Activated T-helper 1 cell treated with anti-CD3 and anti-CD28 coated beads, Interleukin-12 subunit alpha, Interleukin-12 subunit beta, Interleukin-2, Interleukin-4 antibody, amounts not matched to agents 30 ng/mL and 10 ng/mL and 1 ng/mL, durations not matched to agents 14 hours and 24 hours and 36 hours (primary cell): ENCODE measurements at regions of chr5 and their contacts with region 1.

Region 1: DNA sequence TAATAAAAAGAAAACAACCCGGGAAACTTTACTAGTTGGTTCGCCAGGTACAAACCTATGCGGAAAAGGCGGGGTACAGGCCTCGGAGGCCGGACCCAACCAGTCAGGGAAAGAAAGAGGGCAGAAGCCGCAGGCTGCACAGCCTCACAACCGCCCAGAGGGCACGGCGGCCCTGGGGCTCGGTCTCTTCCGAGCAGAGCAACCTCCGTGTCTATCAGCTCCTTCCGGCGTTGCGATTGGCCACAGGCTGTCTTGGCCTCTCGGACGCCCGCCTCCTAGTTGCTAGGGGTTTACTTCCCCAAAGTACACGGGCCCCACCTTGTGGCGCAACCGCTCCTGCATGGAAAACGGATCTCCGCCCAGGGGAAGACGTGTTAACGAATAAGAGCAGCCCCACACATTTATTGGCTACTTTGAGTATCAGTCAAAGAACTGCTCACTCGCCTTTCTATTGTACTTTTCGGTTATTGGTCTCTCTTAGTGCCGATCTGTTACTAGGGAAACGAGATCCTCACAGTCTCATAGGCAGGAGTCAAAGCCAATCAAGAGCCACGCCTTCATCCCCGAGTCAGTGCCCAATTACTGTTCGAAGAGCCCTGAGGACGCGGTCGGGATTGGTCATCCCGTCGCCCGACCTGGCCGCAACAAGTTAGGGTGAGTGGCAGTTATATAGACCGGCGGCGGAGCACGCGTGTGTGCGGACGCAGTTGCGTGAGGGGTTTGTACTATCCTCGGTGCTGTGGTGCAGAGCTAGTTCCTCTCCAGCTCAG is at the start of gene G3BP1:
- DNase-seq: peak; percentile 99
- H3K4me3 Mint-ChIP-seq: peak within 1 kb of the TSS; percentile 88
- H3K27ac Mint-ChIP-seq: peak within 1 kb of the TSS; percentile 67
- H3K4me1 Mint-ChIP-seq: peaks cover 37% of the 10 kb centered on the region
- H3K27me3 Mint-ChIP-seq: no peaks in the 10 kb centered on the region
- total RNA-seq, gene G3BP1: 340 and 348 TPM in 2 replicates

Region 2: DNA sequence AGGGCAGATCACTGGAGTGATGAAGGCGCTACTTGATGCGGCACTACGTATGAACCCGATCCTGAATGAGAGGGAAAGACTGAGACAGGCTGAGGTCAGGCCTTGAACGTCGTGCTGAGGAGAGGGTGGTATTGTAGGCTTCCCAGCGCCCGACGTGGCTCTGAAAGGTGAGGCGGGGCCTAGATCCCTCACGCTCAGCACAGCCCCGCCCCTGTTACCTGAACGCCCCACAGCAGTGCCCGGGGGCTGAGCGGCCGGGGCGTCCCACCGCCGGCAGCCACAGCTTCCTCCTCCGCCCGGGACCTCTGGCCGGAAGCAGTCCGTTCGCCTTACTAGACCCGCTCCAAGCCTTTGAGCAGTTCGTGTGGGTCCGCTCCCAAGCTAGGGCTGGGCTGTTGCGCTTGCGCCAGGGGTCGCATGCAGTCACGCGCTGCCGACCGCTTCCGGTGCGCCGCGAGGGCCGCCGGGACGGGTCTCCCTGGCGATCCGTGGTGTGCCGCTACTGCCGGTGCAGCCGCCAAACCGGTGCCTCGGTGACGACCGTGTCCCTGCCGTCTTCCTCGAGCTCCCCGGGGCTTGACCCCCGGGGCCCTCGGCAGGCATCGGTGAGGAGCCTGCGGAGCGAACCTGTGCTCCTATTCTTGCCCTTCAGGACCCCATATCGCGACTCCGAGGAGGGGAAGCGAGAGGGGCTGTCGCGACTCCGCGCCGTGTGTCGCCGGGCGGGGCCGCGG is 1771.0 kb before region 1 on chr5 and contains the starts of genes HMGXB3 and TIGD6:
- intact Hi-C with region 1: loop called (anchors 5 kb)
- DNase-seq: peak; percentile 82
- H3K4me3 Mint-ChIP-seq: peak within 1 kb of the TSS; percentile 99
- H3K27ac Mint-ChIP-seq: peak within 1 kb of the TSS; percentile 98
- H3K4me1 Mint-ChIP-seq: peaks cover 52% of the 10 kb centered on the region
- H3K27me3 Mint-ChIP-seq: no peaks in the 10 kb centered on the region
- total RNA-seq, gene HMGXB3: 49.1 and 49.9 TPM in 2 replicates
- total RNA-seq, gene TIGD6: 2.4 TPM in 2 replicates

Region 3: GRCh38 chr5:150758531-150759333 is 1012.7 kb before region 1 on chr5 and contains the start of gene DCTN4:
- intact Hi-C with region 1: loop called (anchors 5 kb)
- DNase-seq: peak; percentile 90
- H3K4me3 Mint-ChIP-seq: no peak within 1 kb of the TSS
- H3K27ac Mint-ChIP-seq: no peak within 1 kb of the TSS
- H3K4me1 Mint-ChIP-seq: peaks cover 34% of the 10 kb centered on the region
- H3K27me3 Mint-ChIP-seq: peaks cover 2% of the 10 kb centered on the region
- total RNA-seq, gene DCTN4: 42.3 and 46.4 TPM in 2 replicates

Region 4: DNA sequence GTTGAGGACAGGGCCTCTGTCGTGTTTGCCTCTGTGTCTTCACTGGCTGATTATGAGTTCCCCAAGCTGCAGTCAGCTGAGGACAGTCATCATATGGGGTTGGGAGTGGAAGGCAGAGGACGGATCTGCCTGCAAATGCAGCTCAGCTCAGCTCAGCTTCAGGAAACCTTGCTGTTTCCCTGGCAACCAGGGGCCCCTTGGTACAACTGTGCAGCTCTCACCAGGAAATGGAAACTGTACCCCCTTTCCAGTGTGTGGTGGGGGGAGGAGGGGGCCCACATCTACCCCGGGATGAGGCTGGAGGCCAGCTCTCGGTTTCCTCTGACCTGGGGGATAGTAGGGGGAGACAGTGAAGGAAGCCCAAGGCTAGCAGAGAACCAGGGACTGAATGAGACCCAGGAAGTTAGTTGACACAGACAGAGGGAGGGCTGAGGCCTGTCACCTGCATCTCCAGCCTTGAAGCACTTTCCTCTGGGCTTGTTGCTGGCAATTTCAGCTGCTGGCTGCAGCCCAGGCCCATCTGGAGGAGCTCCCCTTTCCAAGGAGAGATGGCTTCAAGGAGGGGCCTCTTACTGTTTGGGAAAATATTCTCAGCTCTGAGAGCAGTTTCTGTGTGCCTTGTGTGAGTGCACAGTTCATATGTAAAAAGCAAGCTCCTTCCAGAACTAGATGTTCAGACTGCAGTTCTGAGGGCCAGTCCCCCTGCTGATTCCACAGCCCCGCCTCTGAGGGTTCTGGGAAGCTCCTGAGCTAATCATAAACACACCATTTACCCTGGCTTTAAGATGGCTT is 620.8 kb before region 1 on chr5:
- intact Hi-C with region 1: loop called (anchors 1 kb)
- DNase-seq: peak; percentile 67
- H3K4me3 Mint-ChIP-seq: peak overlapping the region; percentile 71
- H3K27ac Mint-ChIP-seq: peak overlapping the region; percentile 96
- H3K4me1 Mint-ChIP-seq: peaks cover 95% of the 10 kb centered on the region
- H3K27me3 Mint-ChIP-seq: no peaks in the 10 kb centered on the region

Region 5: GRCh38 chr5:151447174-151448037 is 324.0 kb before region 1 on chr5 and contains the start of gene SLC36A1:
- intact Hi-C with region 1: loop called (anchors 1 kb)
- DNase-seq: peak; percentile 88
- H3K4me3 Mint-ChIP-seq: peak within 1 kb of the TSS; percentile 98
- H3K27ac Mint-ChIP-seq: peak within 1 kb of the TSS; percentile 96
- H3K4me1 Mint-ChIP-seq: peaks cover 31% of the 10 kb centered on the region
- H3K27me3 Mint-ChIP-seq: peaks cover 25% of the 10 kb centered on the region
- total RNA-seq, gene SLC36A1: 5.8 and 7.9 TPM in 2 replicates

Region 6: GRCh38 chr5:151651997-151652645 is 119.3 kb before region 1 on chr5:
- intact Hi-C with region 1: no loop called
- DNase-seq: peak; percentile 46
- H3K4me3 Mint-ChIP-seq: no peak overlapping the region
- H3K27ac Mint-ChIP-seq: no peak overlapping the region
- H3K4me1 Mint-ChIP-seq: no peaks in the 10 kb centered on the region
- H3K27me3 Mint-ChIP-seq: peaks cover 11% of the 10 kb centered on the region

Region 7: DNA sequence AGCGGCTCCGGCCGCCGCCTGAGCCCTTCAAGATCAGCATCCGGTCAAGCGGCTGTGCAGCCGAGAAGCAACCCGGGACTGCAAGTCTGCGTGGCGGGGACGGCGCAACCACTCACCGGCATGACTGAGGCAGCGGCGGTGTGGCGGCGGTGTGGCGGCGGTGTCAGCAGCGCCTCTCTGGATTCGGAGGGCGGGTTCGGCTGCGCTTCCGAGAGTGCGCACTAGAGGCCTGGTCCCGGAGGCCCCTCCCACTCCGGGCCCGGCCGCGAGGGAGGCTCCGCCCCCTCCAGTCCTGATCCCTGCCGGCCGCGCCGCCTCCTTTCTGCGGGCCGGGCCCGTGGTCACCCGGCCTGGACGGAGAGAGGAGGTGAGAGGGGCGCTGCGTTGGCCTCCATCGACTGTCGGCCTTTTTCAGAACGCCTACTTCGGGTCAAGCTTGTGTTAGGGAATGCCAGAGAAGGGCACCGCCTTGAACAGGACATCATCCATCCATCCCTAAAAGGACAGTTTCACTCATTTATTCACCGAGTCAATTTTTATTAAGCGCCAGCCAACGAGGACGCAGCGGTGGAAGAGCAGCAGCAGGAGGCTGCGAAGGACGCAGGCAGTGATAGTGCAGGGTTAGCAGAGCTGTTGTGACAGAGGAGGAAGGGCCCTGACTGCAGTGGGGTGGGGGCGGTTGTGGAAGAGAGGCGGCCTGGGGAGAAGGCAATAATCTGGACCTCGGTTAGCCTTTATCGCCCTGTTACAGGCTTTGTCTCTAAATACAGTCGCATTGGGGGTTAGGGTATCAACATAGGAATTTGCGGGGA is 12.8 kb before region 1 on chr5 and contains the start of gene ATOX1:
- intact Hi-C with region 1: loop called (anchors 1 kb)
- DNase-seq: peak; percentile 90
- H3K4me3 Mint-ChIP-seq: peak within 1 kb of the TSS; percentile 87
- H3K27ac Mint-ChIP-seq: peak within 1 kb of the TSS; percentile 92
- H3K4me1 Mint-ChIP-seq: peaks cover 43% of the 10 kb centered on the region
- H3K27me3 Mint-ChIP-seq: no peaks in the 10 kb centered on the region
- total RNA-seq, gene ATOX1: 72.5 and 83.7 TPM in 2 replicates